ENCODE measurements at regions of chr11 and their contacts with region 1.

Region 1: DNA sequence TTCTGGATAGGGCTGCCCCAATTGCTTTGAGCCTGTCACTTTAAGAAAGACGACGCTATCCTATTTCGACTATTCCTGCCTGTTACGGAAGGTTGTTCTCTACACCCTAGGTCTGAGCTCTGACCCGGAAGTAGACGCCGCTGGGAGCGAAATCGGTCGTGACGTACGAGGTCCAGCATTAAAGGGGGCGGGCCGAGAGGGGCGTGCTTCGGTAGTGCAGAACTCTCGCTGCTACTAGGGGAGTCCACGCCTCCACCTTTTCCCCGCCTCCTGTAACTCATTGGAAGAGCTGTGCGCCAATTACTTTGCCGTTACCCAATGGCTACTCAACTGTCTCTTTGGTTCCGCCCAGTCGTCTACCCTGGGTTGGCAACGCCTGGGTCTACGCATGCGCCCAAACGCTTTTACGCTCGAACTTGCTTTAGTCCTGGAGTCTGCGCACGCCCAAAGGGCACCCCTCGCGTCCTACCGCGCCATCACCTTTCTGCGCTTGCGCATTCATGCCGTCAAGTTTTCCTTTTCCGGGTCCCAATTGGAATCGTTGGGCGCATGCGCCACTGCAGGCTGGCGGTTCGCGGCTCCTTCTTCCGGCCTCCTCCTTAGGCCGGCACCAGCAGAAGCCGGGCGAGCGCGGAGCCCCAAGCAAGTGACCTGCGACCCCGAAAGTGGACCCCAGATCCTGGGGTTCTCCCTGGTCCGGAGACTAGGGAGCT is at the start of gene PCNX3:
- DNase-seq: peak; percentile 97
- ATAC-seq: peak; percentile 85
- H3K4me3 Mint-ChIP-seq: peak within 1 kb of the TSS; percentile 97
- H3K27ac Mint-ChIP-seq: peak within 1 kb of the TSS; percentile 96
- H3K4me1 Mint-ChIP-seq: peaks cover 22% of the 10 kb centered on the region
- H3K27me3 Mint-ChIP-seq: no peaks in the 10 kb centered on the region
- total RNA-seq, gene PCNX3: 57.2 to 60.2 TPM

Region 2: DNA sequence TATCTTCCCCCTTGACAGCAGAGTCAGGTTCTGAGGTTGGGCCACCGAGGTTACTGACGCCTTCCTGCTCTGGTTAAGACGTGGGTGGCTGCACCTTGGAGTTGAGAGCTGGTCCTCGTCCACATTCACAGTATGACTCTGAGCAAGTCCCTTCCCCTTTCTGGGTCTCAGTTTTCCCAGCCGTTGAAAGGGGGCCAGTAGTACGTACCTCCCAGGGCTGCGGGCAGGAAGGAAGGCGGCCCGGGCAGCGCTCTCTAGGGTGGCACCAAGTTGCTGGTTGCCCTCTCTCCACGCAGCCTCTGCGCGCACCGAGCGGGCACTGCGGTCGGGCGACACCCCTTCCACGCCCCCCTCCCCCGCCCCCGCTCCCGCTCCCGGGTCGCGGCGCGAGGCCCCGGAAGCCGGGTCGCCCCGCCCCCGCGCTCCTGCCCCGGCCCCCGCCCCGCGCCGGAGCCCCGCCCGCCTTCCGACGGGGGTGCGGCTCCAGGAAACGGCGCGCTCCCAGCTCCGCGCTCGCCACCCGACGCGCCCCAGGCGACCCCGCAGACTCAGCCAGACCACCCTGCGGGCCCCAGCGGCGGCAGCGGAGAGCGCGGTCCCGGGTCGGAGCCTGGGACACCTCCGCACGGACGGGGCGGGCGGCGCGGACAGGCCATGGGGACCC is 39.7 kb before region 1 on chr11 and contains the start of gene EHBP1L1:
- POLR2A ChIA-PET with region 1: interaction called, 23 read pairs
- DNase-seq: peak; percentile 91
- ATAC-seq: peak; percentile 24
- H3K4me3 Mint-ChIP-seq: peak within 1 kb of the TSS; percentile 92
- H3K27ac Mint-ChIP-seq: peak within 1 kb of the TSS; percentile 91
- H3K4me1 Mint-ChIP-seq: peaks cover 45% of the 10 kb centered on the region
- H3K27me3 Mint-ChIP-seq: no peaks in the 10 kb centered on the region
- total RNA-seq, gene EHBP1L1: 118 to 120 TPM

Region 3: DNA sequence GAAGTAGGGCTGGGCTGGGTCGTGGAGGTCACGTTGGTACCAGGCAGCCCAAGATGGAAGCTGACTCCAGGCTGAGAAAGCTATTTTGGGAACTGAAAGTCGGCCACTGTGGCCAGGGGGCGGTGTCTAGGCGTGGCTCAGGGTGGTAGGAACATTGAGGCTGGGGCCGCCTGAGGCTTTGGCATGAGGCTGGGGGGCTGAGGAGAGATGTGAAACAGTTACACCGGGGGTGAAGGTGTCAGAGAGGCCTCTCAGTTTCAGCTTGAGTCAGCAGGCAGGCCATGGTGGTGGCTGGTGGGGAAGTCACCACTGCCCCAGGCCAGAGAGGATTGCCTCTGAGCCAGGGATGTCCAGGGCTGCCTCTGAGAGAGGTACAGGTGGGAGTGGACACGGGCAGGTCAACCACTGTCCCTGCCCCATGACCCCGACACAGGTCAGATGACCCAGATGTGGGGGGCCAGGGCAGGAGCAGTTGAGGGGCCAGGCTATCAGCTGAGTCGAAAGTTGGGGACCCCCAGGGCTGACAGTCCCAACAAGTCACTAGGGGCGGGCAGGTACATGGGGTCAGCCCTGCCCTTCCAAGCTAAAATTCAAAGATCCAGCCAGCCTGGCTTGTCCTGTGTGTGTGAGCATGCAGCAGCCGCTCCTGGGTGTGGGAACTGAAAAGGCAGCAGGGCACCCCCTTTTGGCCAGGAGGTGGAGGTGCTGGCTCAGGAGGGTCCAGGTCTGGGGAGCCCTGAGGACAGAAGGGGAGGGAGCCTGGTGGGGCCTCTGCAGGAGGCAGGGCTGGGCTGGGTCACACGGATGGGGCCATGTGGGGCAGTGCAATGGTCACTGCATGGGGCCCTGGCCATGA is 27.0 kb before region 1 on chr11:
- POLR2A ChIA-PET with region 1: interaction called, 13 read pairs
- DNase-seq: peak; percentile 75
- ATAC-seq: peak; percentile 82
- H3K4me3 Mint-ChIP-seq: peak overlapping the region; percentile 64
- H3K27ac Mint-ChIP-seq: peak overlapping the region; percentile 93
- H3K4me1 Mint-ChIP-seq: peaks cover 31% of the 10 kb centered on the region
- H3K27me3 Mint-ChIP-seq: no peaks in the 10 kb centered on the region

Region 4: DNA sequence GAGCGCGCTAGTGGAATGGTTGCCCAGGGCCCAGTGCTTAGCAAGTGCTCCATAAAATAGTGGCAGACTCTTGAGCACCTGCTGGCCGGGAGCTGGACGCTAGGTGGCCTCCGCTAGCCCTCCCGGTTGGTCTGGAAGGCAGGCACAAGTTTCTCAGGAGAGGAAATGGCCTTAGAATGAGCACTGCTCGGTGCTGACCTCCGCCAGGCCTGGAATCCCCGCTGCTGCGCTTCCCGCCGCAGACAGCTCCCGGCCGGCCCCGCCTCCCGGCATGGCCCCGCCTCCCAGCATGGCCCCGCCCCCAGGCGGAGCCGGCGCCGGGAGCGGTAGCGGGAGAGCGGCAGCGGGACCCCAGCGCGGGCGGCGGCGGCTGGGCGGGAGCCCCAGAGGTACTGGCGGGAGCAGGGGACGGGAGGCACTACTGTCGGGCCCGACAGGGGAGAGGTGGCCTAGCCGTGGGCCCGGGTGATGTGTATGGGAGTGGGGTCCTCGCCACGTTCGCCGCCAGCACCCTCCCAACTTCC is 22.5 kb after region 1 on chr11 and contains the start of gene SIPA1:
- POLR2A ChIA-PET with region 1: interaction called, 36 read pairs
- DNase-seq: peak; percentile 94
- ATAC-seq: peak; percentile 34
- H3K4me3 Mint-ChIP-seq: peak within 1 kb of the TSS; percentile 92
- H3K27ac Mint-ChIP-seq: peak within 1 kb of the TSS; percentile 93
- H3K4me1 Mint-ChIP-seq: peaks cover 37% of the 10 kb centered on the region
- H3K27me3 Mint-ChIP-seq: no peaks in the 10 kb centered on the region
- total RNA-seq, gene SIPA1: 245 to 266 TPM

Region 5: DNA sequence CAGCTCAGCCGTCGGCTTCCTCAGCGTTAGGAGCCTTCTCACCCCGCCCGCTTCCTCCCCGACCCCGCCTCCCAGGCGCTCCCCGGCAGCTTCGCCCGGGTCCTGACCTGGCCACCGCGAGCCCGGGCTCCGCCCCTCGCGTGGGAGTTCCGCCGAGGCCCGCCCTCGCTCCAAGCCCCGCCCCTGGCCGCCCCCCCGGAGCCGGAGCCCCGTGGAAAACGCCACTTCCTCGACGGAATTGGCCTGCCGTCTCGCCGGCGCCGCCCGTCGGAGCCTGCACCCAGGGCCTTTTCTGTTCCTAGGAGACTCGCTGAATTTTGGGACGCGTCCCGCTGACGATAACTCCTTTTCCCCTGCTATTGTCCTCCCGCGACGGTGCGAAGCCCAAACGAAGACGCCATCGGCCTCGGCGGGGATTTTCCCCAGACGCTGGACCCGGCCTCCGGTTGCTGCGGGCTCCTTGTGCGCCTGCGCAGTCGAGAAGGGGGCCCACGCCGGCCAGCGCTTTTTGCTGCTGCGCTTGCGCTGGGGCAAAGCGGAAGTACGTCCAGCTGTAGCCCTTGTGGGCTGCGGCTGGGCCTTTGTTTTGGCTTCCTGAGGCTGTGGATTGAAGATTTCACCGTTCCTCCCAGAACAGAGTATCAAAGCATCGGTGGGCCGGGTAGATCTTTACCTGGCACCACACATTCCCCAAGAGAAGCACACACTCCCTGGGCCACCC is 37.3 kb after region 1 on chr11:
- POLR2A ChIA-PET with region 1: interaction called, 22 read pairs
- DNase-seq: peak; percentile 99
- ATAC-seq: peak; percentile 88
- H3K4me3 Mint-ChIP-seq: peak overlapping the region; percentile 90
- H3K27ac Mint-ChIP-seq: peak overlapping the region; percentile 92
- H3K4me1 Mint-ChIP-seq: peaks cover 36% of the 10 kb centered on the region
- H3K27me3 Mint-ChIP-seq: no peaks in the 10 kb centered on the region

Region 6: DNA sequence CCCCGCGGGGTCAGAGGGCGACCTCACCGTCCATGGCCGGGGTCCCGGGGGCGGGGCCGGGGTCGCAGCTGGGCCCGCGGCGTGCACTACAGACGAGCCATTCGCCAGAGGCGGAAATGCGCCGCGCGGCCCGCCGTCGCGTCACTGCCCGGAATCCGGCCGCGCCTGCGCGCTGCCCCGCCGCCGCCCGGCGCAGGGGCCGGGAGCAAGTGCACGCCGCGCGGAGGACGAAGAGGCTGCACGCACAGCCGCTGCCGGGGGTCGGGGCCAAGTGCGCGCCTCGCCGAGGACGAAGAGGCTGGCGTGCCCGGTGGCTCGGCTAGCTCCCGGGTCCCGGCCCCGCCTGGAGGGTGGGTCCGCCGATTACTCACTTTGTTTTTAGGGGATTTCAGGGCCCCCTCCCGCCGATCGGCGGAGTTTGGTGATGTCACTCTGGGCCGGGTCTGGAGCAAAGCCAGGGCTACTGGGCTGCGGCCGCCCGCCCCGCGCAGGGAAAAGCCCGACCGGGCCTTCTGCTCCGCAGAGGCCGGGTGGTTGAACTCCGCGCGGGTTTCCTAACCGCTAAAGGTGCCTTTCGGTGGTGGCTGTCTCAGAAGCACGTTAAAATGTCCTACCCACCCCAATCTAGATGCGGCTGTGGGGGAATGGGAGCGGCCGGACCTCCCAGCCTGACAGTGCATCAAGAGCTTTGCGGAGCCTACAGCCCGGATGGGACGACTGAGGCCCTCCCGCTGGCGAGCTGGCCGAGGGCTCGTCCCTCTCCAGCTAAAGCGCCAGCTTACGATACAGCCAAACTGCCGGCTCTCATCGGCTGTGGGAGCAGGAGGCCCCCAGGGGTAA is 47.6 kb after region 1 on chr11 and contains the start of gene RELA:
- POLR2A ChIA-PET with region 1: interaction called, 12 read pairs
- DNase-seq: peak; percentile 95
- ATAC-seq: peak; percentile 86
- H3K4me3 Mint-ChIP-seq: peak within 1 kb of the TSS; percentile 93
- H3K27ac Mint-ChIP-seq: peak within 1 kb of the TSS; percentile 94
- H3K4me1 Mint-ChIP-seq: peaks cover 24% of the 10 kb centered on the region
- H3K27me3 Mint-ChIP-seq: no peaks in the 10 kb centered on the region
- total RNA-seq, gene RELA: 112 to 117 TPM

Region 7: GRCh38 chr11:65692367-65692766 is 77.0 kb after region 1 on chr11:
- POLR2A ChIA-PET with region 1: no interaction called
- DNase-seq: no peak
- ATAC-seq: no peak
- H3K4me3 Mint-ChIP-seq: no peak overlapping the region
- H3K27ac Mint-ChIP-seq: no peak overlapping the region
- H3K4me1 Mint-ChIP-seq: peaks cover 3% of the 10 kb centered on the region
- H3K27me3 Mint-ChIP-seq: peaks cover 5% of the 10 kb centered on the region

Measured in activated naive CD8-positive, alpha-beta T cell treated with anti-CD3 and anti-CD28 coated beads, Interleukin-2, amount 10 ng/mL, durations not matched to agents 7 days and 5 days (primary cell).